Naive thymus-derived CD4-positive, alpha-beta T cell (primary cell): ENCODE measurements at regions of chr11 and their contacts with region 1.

Region 1: GRCh38 chr11:102396708-102397563 is 49.9 kb downstream of the BIRC2 start:
- DNase-seq: peak in 1 of 9 donors; percentile 13
- ATAC-seq: no peak
- H3K4me3 ChIP-seq: no peak overlapping the region
- H3K4me3 Mint-ChIP-seq: peak overlapping the region in 9 of 10 donors; percentile 22 to 69 (median 43)
- H3K27ac ChIP-seq: peak overlapping the region; percentile 33
- H3K27ac Mint-ChIP-seq: peak overlapping the region; percentile 18 to 87 (median 73)
- H3K4me1 ChIP-seq: peaks cover 0 to 24% of the 10 kb centered on the region in 2 donors
- H3K4me1 Mint-ChIP-seq: peaks cover 12 to 67% (median 52%) of the 10 kb centered on the region in 7 donors
- H3K27me3 ChIP-seq: no peaks in the 10 kb centered on the region
- H3K27me3 Mint-ChIP-seq: no peaks in the 10 kb centered on the region

Region 2: DNA sequence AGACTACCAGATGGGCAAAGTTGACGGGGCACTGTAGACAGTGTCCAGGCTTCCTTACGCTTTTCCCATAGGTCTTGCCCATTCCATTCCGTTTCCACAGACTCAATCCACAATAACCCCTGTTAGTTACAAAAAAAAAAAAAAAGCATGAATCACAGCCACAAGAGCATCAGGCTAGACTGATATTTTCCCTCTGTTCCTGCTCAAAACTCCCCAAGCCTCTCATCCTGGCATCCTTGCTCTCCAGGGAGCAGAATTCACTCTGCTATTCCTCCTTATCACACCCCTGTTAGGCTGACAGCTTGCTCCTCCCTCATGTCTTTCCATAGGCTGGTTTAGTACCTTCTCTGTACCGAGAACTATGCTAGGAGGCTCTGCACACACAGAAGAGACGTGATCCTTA is 13.4 kb after region 1 on chr11:
- CTCF ChIA-PET with region 1: interaction called, 22 read pairs
- POLR2A ChIA-PET with region 1: interaction called, 12 read pairs
- intact Hi-C with region 1: loop called in 1 of 2 experiments (anchors 1 kb)
- DNase-seq: no peak
- ATAC-seq: no peak
- H3K4me3 ChIP-seq: no peak overlapping the region
- H3K4me3 Mint-ChIP-seq: peak overlapping the region in 6 of 10 donors; percentile 33 to 76 (median 54)
- H3K27ac ChIP-seq: no peak overlapping the region
- H3K27ac Mint-ChIP-seq: peak overlapping the region; percentile 51 to 93 (median 72)
- H3K4me1 ChIP-seq: peaks cover 20 to 76% of the 10 kb centered on the region in 2 donors
- H3K4me1 Mint-ChIP-seq: peaks cover 70 to 99% (median 92%) of the 10 kb centered on the region in 7 donors
- H3K27me3 ChIP-seq: no peaks in the 10 kb centered on the region
- H3K27me3 Mint-ChIP-seq: no peaks in the 10 kb centered on the region

Region 3: GRCh38 chr11:102415304-102415916 is 18.5 kb after region 1 on chr11:
- CTCF ChIA-PET with region 1: interaction called, 4 read pairs
- POLR2A ChIA-PET with region 1: interaction called, 5 read pairs
- intact Hi-C with region 1: loop called in 1 of 2 experiments (anchors 1 kb)
- DNase-seq: peak in 3 of 9 donors; percentile 26 to 45 (median 39)
- ATAC-seq: peak; percentile 59
- H3K4me3 ChIP-seq: peak overlapping the region; percentile 34
- H3K4me3 Mint-ChIP-seq: peak overlapping the region; percentile 35 to 89 (median 80)
- H3K27ac ChIP-seq: peak overlapping the region; percentile 37
- H3K27ac Mint-ChIP-seq: peak overlapping the region; percentile 63 to 97 (median 89)
- H3K4me1 ChIP-seq: peaks cover 30 to 70% of the 10 kb centered on the region in 2 donors
- H3K4me1 Mint-ChIP-seq: peaks cover 67 to 100% (median 96%) of the 10 kb centered on the region in 7 donors
- H3K27me3 ChIP-seq: no peaks in the 10 kb centered on the region
- H3K27me3 Mint-ChIP-seq: no peaks in the 10 kb centered on the region